ENCODE measurements at regions of chr16 and their contacts with region 1.

Region 1: GRCh38 chr16:67672739-67673662 is 6.4 kb downstream of the C16orf86 start:
- DNase-seq: peak; percentile 89
- H3K4me3 ChIP-seq: no peak overlapping the region
- H3K27ac ChIP-seq: peak overlapping the region; percentile 86
- H3K4me1 ChIP-seq: peaks cover 22% of the 10 kb centered on the region
- H3K27me3 ChIP-seq: no peaks in the 10 kb centered on the region
- CTCF ChIP-seq: peak; percentile 83

Region 2: DNA sequence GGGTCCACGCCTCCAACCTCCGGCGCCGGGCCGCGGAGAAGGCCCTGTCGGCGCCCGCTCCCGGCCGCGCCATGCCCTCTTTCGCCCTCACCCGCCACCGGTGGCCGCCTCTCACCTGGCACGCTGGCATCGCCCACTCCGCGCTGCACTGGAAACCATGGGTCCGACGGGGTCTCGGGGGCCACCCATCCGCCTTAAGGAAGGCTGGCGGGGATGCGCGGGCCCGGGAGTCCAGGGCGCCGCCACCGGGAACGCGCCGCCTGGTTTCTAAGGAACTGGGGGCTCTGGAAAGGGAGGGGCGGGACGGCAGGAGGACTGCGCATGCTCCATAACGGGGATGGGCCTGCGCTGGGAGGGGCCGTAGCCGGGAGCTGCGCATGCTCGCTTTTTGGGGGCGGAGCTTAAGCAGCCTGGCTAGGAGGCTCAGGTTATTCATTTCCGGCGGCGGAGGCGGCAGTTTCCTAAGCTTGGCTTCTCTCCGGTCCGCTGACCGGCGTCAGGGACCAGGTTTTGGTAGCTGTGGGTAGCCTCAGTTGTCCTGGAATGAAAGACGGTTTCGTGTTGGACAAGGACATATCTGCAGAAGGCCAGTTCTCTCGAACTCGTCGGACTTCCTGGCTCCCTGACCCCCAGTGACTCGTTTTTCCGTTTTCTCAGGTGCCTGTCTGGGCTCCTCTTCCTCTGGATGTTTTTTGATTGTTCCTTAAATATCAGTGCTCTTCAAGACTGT is 46.2 kb after region 1 on chr16 and contains the start of gene GFOD2:
- intact Hi-C with region 1: loop called (anchors 5 kb)
- DNase-seq: peak; percentile 98
- H3K4me3 ChIP-seq: peak within 1 kb of the TSS; percentile 94
- H3K27ac ChIP-seq: peak within 1 kb of the TSS; percentile 66
- H3K4me1 ChIP-seq: peaks cover 14% of the 10 kb centered on the region
- H3K27me3 ChIP-seq: no peaks in the 10 kb centered on the region
- CTCF ChIP-seq: no peak
- total RNA-seq, gene GFOD2: 22.1 to 33.8 TPM

Region 3: GRCh38 chr16:67928561-67929364 is 255.8 kb after region 1 on chr16:
- intact Hi-C with region 1: loop called (anchors 5 kb)
- DNase-seq: peak; percentile 84
- H3K4me3 ChIP-seq: no peak overlapping the region
- H3K27ac ChIP-seq: no peak overlapping the region
- H3K4me1 ChIP-seq: no peaks in the 10 kb centered on the region
- H3K27me3 ChIP-seq: no peaks in the 10 kb centered on the region
- CTCF ChIP-seq: peak; percentile 85

Measured in colonic mucosa (tissue), 4 donors.